ENCODE measurements at regions of chr15 and their contacts with region 1.

Region 1: GRCh38 chr15:38354315-38354929 is 99.5 kb upstream of the FAM98B start:
- DNase-seq: peak; percentile 16
- ATAC-seq: peak; percentile 65
- H3K4me3 Mint-ChIP-seq: no peak overlapping the region
- H3K27ac Mint-ChIP-seq: no peak overlapping the region
- H3K4me1 Mint-ChIP-seq: no peaks in the 10 kb centered on the region
- H3K27me3 Mint-ChIP-seq: no peaks in the 10 kb centered on the region
- CTCF ChIP-seq: no peak

Region 2: GRCh38 chr15:37134699-37135131 is 1219.7 kb before region 1 on chr15:
- CTCF ChIA-PET with region 1: no interaction called
- POLR2A ChIA-PET with region 1: no interaction called
- intact Hi-C with region 1: loop called (anchors 10 kb)
- DNase-seq: no peak
- ATAC-seq: no peak
- H3K4me3 Mint-ChIP-seq: no peak overlapping the region
- H3K27ac Mint-ChIP-seq: no peak overlapping the region
- H3K4me1 Mint-ChIP-seq: no peaks in the 10 kb centered on the region
- H3K27me3 Mint-ChIP-seq: peaks cover 9% of the 10 kb centered on the region
- CTCF ChIP-seq: peak; percentile 69

Region 3: GRCh38 chr15:37981775-37982174 is 372.6 kb before region 1 on chr15:
- CTCF ChIA-PET with region 1: no interaction called
- POLR2A ChIA-PET with region 1: no interaction called
- intact Hi-C with region 1: no loop called
- DNase-seq: no peak
- ATAC-seq: no peak
- H3K4me3 Mint-ChIP-seq: no peak overlapping the region
- H3K27ac Mint-ChIP-seq: no peak overlapping the region
- H3K4me1 Mint-ChIP-seq: no peaks in the 10 kb centered on the region
- H3K27me3 Mint-ChIP-seq: peaks cover 8% of the 10 kb centered on the region
- CTCF ChIP-seq: no peak

Region 4: DNA sequence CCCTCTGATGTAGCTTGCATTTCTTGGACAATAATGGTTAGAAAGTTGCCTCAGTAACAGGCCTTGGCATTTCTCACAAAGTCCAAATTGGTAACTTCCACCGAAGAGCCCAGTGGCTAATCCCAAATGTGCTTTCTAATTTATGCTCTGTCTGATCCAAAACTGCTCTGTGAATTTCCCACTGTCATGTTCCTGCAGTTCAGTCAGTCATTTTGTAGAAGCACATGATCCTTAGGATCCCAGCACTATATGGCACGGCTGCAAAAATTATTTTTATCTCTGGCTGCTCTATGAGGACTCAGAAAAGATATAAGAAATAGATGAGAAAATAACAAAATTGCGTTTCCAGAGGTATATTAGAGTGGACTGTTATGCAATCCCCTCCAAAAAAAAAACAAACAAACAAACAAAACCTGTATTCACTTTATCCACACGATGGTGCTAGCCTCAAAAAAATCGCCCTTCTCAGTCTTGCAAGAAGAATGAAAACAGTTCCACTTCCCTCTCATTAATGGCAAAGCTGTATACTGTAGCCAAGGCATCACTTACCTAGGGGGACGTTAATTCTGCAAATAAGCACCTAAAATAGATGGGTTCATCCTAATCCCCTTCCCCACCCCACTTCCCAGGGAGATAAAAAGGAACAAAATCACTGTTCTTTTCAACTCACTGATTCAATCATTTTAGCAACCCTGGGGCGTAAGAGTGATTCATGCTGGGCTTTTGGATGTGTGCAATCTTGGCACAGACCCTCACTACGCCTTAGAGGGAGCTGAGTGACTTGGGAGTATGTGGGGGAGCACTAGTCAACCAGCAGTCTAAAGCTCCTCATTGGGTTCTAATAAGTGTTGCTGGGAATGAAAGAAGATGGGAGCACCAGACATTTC is 358.7 kb before region 1 on chr15:
- CTCF ChIA-PET with region 1: interaction called, 54 read pairs
- POLR2A ChIA-PET with region 1: no interaction called
- intact Hi-C with region 1: loop called (anchors 1 kb)
- DNase-seq: no peak
- ATAC-seq: peak; percentile 47
- H3K4me3 Mint-ChIP-seq: no peak overlapping the region
- H3K27ac Mint-ChIP-seq: no peak overlapping the region
- H3K4me1 Mint-ChIP-seq: no peaks in the 10 kb centered on the region
- H3K27me3 Mint-ChIP-seq: peaks cover 16% of the 10 kb centered on the region
- CTCF ChIP-seq: no peak

Region 5: DNA sequence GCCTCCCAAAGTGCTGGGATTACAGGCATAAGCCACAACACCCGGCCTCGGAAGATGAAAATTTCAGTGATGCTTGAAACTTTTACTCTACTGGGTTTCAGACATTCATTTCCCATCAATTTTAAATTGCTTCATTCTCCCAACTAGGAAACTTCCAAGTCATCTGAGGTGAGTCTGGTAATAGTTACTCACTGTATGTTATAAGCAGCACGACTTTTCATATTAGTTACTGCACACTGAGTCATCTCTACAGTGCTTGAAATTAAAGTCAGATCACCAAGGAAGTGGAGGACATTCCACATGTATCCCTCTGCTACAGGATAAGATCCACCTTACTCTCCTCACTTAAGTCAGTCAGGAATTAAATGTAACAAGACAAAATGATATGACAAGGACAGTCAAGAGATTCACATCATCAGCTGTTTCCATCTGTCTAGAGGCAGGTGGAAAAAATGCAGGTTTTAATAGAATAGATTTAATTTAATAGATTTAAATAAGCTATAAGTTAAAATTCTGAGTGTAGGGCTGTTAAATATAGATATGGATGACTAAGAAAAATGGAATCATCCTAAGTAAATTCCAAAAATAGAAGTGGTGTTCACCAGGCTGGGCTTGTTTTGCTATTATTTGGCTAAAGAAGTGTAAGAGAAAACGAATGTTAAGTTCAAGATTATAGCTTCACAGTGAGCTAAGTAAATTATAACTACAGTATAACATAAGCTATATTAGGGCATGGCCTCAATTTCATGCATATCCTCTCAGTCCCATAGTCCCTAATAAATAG is 315.6 kb before region 1 on chr15:
- CTCF ChIA-PET with region 1: no interaction called
- POLR2A ChIA-PET with region 1: no interaction called
- intact Hi-C with region 1: no loop called
- DNase-seq: no peak
- ATAC-seq: no peak
- H3K4me3 Mint-ChIP-seq: no peak overlapping the region
- H3K27ac Mint-ChIP-seq: no peak overlapping the region
- H3K4me1 Mint-ChIP-seq: no peaks in the 10 kb centered on the region
- H3K27me3 Mint-ChIP-seq: peaks cover 10% of the 10 kb centered on the region
- CTCF ChIP-seq: no peak

Region 6: GRCh38 chr15:38072348-38073177 is 281.9 kb before region 1 on chr15:
- CTCF ChIA-PET with region 1: interaction called, 6 read pairs
- POLR2A ChIA-PET with region 1: no interaction called
- intact Hi-C with region 1: loop called (anchors 1 kb)
- DNase-seq: peak; percentile 37
- ATAC-seq: peak; percentile 63
- H3K4me3 Mint-ChIP-seq: peak overlapping the region; percentile 86
- H3K27ac Mint-ChIP-seq: peak overlapping the region; percentile 63
- H3K4me1 Mint-ChIP-seq: peaks cover 60% of the 10 kb centered on the region
- H3K27me3 Mint-ChIP-seq: peaks cover 11% of the 10 kb centered on the region
- CTCF ChIP-seq: no peak

Region 7: DNA sequence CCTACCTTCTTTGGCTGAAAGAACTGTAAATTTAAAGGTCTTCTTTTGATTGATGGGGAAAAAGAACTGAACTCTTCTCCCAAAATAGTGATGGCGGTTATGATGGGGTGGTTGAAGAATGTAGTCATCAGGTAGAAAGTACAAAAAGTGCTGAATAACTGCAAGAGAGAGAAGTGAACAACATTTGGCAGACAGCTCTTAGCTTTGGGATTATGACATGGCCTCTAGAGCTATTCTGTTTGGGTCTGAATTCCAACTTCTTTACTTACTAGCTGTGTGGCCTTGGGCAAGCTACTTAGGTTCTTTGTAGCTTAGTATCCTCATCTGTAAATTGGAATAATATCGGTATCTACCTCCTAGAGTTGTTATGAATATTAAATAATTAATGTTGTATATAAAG is 10.1 kb before region 1 on chr15:
- CTCF ChIA-PET with region 1: no interaction called
- POLR2A ChIA-PET with region 1: no interaction called
- intact Hi-C with region 1: no loop called
- DNase-seq: no peak
- ATAC-seq: no peak
- H3K4me3 Mint-ChIP-seq: no peak overlapping the region
- H3K27ac Mint-ChIP-seq: no peak overlapping the region
- H3K4me1 Mint-ChIP-seq: no peaks in the 10 kb centered on the region
- H3K27me3 Mint-ChIP-seq: no peaks in the 10 kb centered on the region
- CTCF ChIP-seq: no peak

Region 8: GRCh38 chr15:38768970-38769369 is 414.5 kb after region 1 on chr15:
- CTCF ChIA-PET with region 1: no interaction called
- POLR2A ChIA-PET with region 1: no interaction called
- intact Hi-C with region 1: no loop called
- DNase-seq: no peak
- ATAC-seq: no peak
- H3K4me3 Mint-ChIP-seq: no peak overlapping the region
- H3K27ac Mint-ChIP-seq: no peak overlapping the region
- H3K4me1 Mint-ChIP-seq: no peaks in the 10 kb centered on the region
- H3K27me3 Mint-ChIP-seq: peaks cover 8% of the 10 kb centered on the region
- CTCF ChIP-seq: no peak